ENCODE measurements at regions of chr5 and their contacts with region 1.

Region 1: DNA sequence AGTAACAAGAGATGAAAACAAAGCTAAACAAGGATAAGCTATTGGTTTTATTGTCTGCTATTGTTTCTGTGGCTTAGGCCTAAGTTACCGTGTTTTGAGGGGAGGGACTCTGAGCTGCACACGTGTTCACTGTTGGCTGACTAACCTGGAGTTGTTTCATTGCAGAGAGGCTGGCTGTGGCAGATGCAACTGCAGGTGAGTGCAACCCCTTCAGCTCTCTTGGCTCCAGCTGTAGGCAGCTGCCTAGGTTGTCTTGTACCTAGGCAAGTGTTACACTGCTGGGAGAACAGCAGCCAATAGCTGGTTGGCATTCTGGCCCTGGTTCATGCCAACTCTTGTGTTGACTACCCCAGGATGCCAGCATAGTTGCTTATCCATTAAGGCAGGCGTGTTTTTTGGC is 17.6 kb upstream of the MATR3 start:
- DNase-seq: peak; percentile 53
- ATAC-seq: peak; percentile 15
- H3K4me3 Mint-ChIP-seq: peak overlapping the region; percentile 85
- H3K27ac Mint-ChIP-seq: peak overlapping the region; percentile 88
- H3K4me1 Mint-ChIP-seq: peaks cover 69% of the 10 kb centered on the region
- H3K27me3 Mint-ChIP-seq: peaks cover 3% of the 10 kb centered on the region

Region 2: DNA sequence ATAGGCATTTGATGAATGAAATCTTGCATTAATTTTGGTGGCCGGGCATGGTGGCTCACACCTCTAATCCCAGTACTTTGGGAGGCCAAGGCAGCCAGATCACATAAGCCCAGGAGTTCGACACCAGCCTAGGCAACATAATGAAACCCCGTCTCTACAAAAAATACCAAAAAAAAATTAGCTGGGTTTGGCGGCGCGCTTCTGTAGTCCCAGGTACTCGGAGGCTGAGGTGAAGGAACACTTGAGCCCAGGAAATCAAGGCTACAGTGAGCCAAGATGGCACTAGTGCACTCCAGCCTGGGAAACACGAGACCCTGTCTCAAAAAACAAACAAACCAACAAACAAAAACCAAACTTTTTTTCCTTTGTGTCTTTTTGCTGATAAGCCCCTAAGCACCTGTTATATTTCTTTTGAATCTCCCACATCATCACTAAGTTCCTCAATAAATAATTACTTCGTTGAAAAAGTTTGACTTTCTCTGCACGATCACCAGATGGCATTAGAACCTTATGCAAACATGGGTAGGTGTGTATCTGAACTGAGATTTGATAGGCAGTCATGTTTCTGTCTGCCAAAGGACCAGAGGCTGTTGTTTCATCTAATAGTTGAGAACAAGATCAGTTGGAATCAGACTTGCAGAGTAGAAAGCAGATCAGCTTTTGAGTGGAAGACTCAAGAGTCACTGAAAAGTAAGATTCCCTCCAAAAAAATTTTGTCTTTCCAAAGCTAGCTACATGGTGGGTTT is 12.1 kb after region 1 on chr5:
- CTCF ChIA-PET with region 1: interaction called, 12 read pairs
- DNase-seq: peak; percentile 34
- ATAC-seq: peak; percentile 47
- H3K4me3 Mint-ChIP-seq: no peak overlapping the region
- H3K27ac Mint-ChIP-seq: peak overlapping the region; percentile 16
- H3K4me1 Mint-ChIP-seq: peaks cover 9% of the 10 kb centered on the region
- H3K27me3 Mint-ChIP-seq: no peaks in the 10 kb centered on the region

Region 3: GRCh38 chr5:139446956-139447779 is 171.2 kb after region 1 on chr5:
- CTCF ChIA-PET with region 1: no interaction called
- DNase-seq: peak; percentile 66
- ATAC-seq: peak; percentile 74
- H3K4me3 Mint-ChIP-seq: no peak overlapping the region
- H3K27ac Mint-ChIP-seq: peak overlapping the region; percentile 81
- H3K4me1 Mint-ChIP-seq: peaks cover 65% of the 10 kb centered on the region
- H3K27me3 Mint-ChIP-seq: no peaks in the 10 kb centered on the region